Activated T-helper 1 cell treated with anti-CD3 and anti-CD28 coated beads, Interleukin-12 subunit alpha, Interleukin-12 subunit beta, Interleukin-2, Interleukin-4 antibody, amounts not matched to agents 30 ng/mL and 10 ng/mL and 1 ng/mL, durations not matched to agents 14 hours and 24 hours and 36 hours (primary cell): ENCODE measurements at regions of chr4 and their contacts with region 1.

Region 1: DNA sequence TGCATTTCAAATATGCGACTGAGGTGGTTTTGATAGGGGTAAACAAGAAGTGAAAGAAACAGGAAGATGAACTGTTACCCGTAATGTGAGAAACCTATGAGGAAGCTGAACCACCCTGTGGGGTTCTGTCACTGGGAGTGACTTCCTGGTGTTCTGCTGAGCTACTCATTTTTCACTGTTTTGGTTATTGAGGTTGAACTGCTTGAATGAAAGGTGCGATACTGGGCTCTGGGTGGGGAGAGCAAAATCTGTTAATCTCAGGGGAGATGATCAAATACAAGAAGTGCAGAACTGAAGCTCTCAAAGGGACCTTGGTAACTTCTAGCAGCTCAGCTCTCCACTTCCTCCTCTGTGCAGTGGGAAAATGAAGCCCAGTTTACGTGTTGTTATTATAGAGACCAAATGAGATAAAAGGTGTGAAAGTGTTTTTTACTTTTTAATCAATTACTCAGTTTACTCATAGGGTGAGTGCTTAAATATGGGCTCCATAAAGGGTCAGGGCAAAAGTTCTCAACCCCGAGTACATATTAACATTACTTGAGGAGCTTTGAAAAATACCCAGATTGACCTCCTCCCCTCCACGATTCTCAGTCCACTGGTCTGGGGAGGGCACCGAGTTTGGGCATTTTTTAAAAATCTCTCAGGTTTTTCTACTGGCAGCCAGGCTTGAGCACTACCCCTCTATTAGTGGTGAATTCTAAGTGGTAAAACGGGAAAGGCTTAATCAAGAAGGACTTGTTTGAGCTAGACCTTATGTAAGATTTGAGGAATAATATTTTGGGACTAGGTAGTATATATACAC is 66.7 kb downstream of the COQ2 start:
- DNase-seq: peak; percentile 73
- H3K4me3 Mint-ChIP-seq: peak overlapping the region; percentile 66
- H3K27ac Mint-ChIP-seq: peak overlapping the region; percentile 91
- H3K4me1 Mint-ChIP-seq: peaks cover 81% of the 10 kb centered on the region
- H3K27me3 Mint-ChIP-seq: peaks cover 2% of the 10 kb centered on the region

Region 2: GRCh38 chr4:82373816-82374625 is 843.9 kb before region 1 on chr4 and contains the start of gene HNRNPD:
- intact Hi-C with region 1: loop called (anchors 5 kb)
- DNase-seq: peak; percentile 92
- H3K4me3 Mint-ChIP-seq: peak within 1 kb of the TSS; percentile 99
- H3K27ac Mint-ChIP-seq: peak within 1 kb of the TSS; percentile 100
- H3K4me1 Mint-ChIP-seq: peaks cover 37% of the 10 kb centered on the region
- H3K27me3 Mint-ChIP-seq: peaks cover 2% of the 10 kb centered on the region
- total RNA-seq, gene HNRNPD: 434 and 438 TPM in 2 replicates

Region 3: DNA sequence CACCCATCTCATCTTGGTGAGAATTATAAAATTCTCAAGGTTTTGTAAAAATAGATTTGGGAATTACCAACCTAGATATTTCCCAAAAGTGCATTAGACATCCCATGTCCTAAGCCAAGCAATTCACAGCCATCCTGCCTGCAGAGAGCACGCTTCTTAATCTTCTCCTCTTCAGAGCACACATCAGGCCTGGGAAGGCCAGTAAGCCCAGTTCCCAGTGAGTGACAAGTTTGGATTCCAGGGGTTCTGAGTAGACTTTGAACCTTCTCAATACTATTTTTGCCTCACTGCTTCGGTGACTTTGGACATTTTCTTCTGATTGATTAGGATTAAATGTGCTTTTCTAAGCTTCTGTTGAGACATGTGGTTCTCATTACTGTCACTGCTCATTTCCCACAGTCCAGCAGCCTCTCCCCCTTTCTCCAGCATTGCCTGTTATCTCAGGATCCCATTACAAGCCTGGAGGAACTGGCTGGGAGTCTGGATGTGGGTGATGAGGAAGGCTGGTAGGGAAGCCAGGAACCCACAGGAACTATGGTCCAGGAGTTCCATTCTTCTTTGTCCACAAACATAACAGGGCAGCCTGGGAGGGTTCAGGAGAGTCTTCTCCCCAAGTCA is 599.7 kb before region 1 on chr4:
- intact Hi-C with region 1: no loop called
- DNase-seq: no peak
- H3K4me3 Mint-ChIP-seq: no peak overlapping the region
- H3K27ac Mint-ChIP-seq: no peak overlapping the region
- H3K4me1 Mint-ChIP-seq: no peaks in the 10 kb centered on the region
- H3K27me3 Mint-ChIP-seq: peaks cover 2% of the 10 kb centered on the region

Region 4: GRCh38 chr4:83074086-83074704 is 143.7 kb before region 1 on chr4:
- intact Hi-C with region 1: loop called (anchors 1 kb)
- DNase-seq: peak; percentile 66
- H3K4me3 Mint-ChIP-seq: no peak overlapping the region
- H3K27ac Mint-ChIP-seq: peak overlapping the region; percentile 19
- H3K4me1 Mint-ChIP-seq: peaks cover 29% of the 10 kb centered on the region
- H3K27me3 Mint-ChIP-seq: no peaks in the 10 kb centered on the region

Region 5: GRCh38 chr4:83231620-83232076 is 13.7 kb after region 1 on chr4:
- intact Hi-C with region 1: loop called (anchors 1 kb)
- DNase-seq: peak; percentile 63
- H3K4me3 Mint-ChIP-seq: peak overlapping the region; percentile 52
- H3K27ac Mint-ChIP-seq: peak overlapping the region; percentile 69
- H3K4me1 Mint-ChIP-seq: peaks cover 59% of the 10 kb centered on the region
- H3K27me3 Mint-ChIP-seq: peaks cover 11% of the 10 kb centered on the region

Region 6: DNA sequence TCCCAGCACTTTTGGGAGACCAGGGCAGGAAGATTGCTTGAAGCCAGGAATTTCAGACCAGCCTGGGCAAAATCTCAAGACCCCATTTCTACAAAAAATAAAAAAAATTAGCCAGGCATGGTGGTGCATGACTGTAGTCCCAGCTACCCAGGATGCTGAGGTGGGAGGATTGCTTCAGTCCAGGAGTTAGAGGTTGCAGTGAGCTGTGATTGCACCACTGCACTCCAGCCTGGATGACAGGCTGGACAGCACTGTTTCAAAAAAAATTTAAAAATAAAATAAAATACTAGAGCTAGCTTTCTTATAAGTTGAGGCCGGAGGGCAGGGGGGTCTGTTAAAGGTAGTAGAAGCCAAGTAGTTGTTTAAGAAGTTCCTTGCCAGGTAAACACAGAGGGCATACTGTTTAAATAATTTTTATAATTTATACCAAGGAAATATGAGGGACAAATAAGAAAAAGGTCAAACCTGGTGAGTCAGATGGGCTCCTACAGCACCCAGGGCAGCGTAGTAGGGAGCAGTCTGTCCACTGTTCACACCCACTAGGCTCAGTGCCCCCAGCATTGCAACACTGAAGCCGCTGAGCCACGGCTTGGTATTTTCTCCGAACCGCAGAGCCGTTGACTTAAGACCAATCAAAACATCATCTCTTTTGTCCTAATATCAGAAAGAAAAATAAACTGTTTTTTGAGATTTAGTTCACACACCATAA is 49.4 kb after region 1 on chr4:
- intact Hi-C with region 1: no loop called
- DNase-seq: no peak
- H3K4me3 Mint-ChIP-seq: no peak overlapping the region
- H3K27ac Mint-ChIP-seq: no peak overlapping the region
- H3K4me1 Mint-ChIP-seq: peaks cover 16% of the 10 kb centered on the region
- H3K27me3 Mint-ChIP-seq: no peaks in the 10 kb centered on the region

Region 7: GRCh38 chr4:83340692-83341343 is 122.9 kb after region 1 on chr4:
- intact Hi-C with region 1: loop called (anchors 5 kb)
- DNase-seq: peak; percentile 48
- H3K4me3 Mint-ChIP-seq: peak overlapping the region; percentile 23
- H3K27ac Mint-ChIP-seq: peak overlapping the region; percentile 98
- H3K4me1 Mint-ChIP-seq: peaks cover 30% of the 10 kb centered on the region
- H3K27me3 Mint-ChIP-seq: peaks cover 26% of the 10 kb centered on the region